Ascending aorta (tissue), 2 donors: ENCODE measurements at regions of chr13 and their contacts with region 1.

Region 1: GRCh38 chr13:42039946-42040729 is 8.3 kb upstream of the DGKH start:
- DNase-seq: peak; percentile 65 to 95
- H3K4me3 ChIP-seq: peak overlapping the region; percentile 78 to 91
- H3K27ac ChIP-seq: peak overlapping the region; percentile 92 to 97
- H3K4me1 ChIP-seq: peaks cover 0 to 8% of the 10 kb centered on the region in 2 donors
- H3K27me3 ChIP-seq: no peaks in the 10 kb centered on the region
- CTCF ChIP-seq: no peak

Region 2: GRCh38 chr13:40982772-40983171 is 1057.4 kb before region 1 on chr13:
- intact Hi-C with region 1: loop called (anchors 5 kb)
- DNase-seq: no peak
- H3K4me3 ChIP-seq: peak overlapping the region; percentile 25 to 41
- H3K27ac ChIP-seq: peak overlapping the region; percentile 73 to 75
- H3K4me1 ChIP-seq: peaks cover 7 to 21% of the 10 kb centered on the region in 2 donors
- H3K27me3 ChIP-seq: no peaks in the 10 kb centered on the region
- CTCF ChIP-seq: no peak

Region 3: GRCh38 chr13:41456768-41457588 is 583.2 kb before region 1 on chr13 and contains the start of gene RGCC:
- intact Hi-C with region 1: loop called (anchors 5 kb)
- DNase-seq: peak; percentile 70 to 94
- H3K4me3 ChIP-seq: peak within 1 kb of the TSS; percentile 80 to 99
- H3K27ac ChIP-seq: peak within 1 kb of the TSS; percentile 61 to 78
- H3K4me1 ChIP-seq: peaks cover 0 to 18% of the 10 kb centered on the region in 2 donors
- H3K27me3 ChIP-seq: no peaks in the 10 kb centered on the region
- CTCF ChIP-seq: no peak
- total RNA-seq, gene RGCC: 184 TPM

Region 4: DNA sequence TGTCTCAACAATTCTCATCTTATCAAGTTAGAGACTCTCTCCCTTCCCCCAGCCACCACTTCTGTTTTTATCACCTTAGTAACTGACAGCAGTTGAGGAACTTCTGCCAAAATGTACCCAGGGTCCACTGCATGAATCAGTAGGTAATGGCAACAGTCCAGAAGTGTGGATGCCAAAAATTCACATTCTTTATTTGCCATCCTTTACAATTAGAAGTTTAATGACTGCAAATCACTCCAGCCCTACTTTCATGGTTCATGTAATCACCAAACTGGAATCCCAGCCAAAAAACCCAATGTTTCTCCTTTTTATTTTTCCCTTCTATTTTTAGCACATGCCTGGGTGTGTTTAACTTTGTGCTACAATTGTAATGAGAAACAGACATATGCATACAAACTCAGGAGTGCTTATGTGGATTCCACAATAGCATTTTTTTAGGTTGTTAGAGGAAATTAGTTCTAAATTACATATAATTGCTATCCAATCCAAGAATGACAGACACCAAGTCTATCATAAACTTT is 339.3 kb before region 1 on chr13:
- intact Hi-C with region 1: loop called (anchors 10 kb)
- DNase-seq: no peak
- H3K4me3 ChIP-seq: peak overlapping the region in 1 of 2 donors; percentile 21
- H3K27ac ChIP-seq: peak overlapping the region; percentile 37 to 50
- H3K4me1 ChIP-seq: peaks cover 4 to 37% of the 10 kb centered on the region in 2 donors
- H3K27me3 ChIP-seq: no peaks in the 10 kb centered on the region
- CTCF ChIP-seq: no peak

Region 5: GRCh38 chr13:42110410-42111155 is 70.4 kb after region 1 on chr13:
- intact Hi-C with region 1: loop called (anchors 2 kb)
- DNase-seq: no peak
- H3K4me3 ChIP-seq: no peak overlapping the region
- H3K27ac ChIP-seq: no peak overlapping the region
- H3K4me1 ChIP-seq: peaks cover 0 to 6% of the 10 kb centered on the region in 2 donors
- H3K27me3 ChIP-seq: no peaks in the 10 kb centered on the region
- CTCF ChIP-seq: peak; percentile 65 to 79 (median 75)

Region 6: DNA sequence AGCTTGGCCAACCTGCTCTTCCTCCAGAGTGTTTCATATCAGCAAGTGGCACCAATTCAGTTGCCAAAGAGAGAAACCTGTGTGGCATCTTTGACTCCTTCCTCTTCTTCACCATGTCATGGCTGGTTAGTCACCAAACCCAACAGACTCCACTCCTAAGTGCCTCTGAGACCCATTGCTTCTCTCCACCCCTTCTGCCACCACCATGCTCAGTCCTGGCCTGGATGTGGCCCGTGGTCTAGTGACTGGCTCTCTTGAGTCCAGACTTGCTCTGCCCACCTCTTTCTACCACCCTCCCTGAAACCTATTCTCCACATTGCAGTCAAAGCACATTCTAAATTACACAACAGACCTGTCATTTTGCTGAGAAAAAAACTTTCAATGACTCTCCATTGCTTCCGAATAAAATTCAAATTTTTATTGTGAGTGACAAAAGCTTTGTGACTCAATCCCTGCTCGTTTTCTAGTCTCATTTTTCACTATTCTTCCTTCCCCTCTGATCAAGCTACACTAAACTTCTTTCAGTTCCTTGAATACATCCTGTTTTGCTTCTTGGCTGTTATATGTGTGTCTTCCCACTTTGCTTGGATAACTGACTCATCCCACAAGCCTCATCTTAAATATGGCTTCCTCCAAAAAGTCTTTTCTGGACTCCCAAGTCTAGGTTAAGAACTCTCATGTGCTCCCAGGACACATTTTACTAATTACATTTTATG is 521.8 kb after region 1 on chr13:
- intact Hi-C with region 1: no loop called
- DNase-seq: no peak
- H3K4me3 ChIP-seq: no peak overlapping the region
- H3K27ac ChIP-seq: no peak overlapping the region
- H3K4me1 ChIP-seq: no peaks in the 10 kb centered on the region
- H3K27me3 ChIP-seq: no peaks in the 10 kb centered on the region
- CTCF ChIP-seq: no peak